CD4-positive, alpha-beta T cell (primary cell): ENCODE measurements at regions of chr1 and their contacts with region 1.

Region 1: GRCh38 chr1:165597883-165598675 is 33.0 kb upstream of the MGST3 start:
- DNase-seq: peak; percentile 65 to 96 (median 81)
- ATAC-seq: peak; percentile 92
- H3K4me3 ChIP-seq: peak overlapping the region; percentile 58
- H3K4me3 Mint-ChIP-seq: peak overlapping the region; percentile 88
- H3K27ac ChIP-seq: no peak overlapping the region
- H3K27ac Mint-ChIP-seq: peak overlapping the region; percentile 38
- H3K4me1 ChIP-seq: peaks cover 19% of the 10 kb centered on the region
- H3K4me1 Mint-ChIP-seq: peaks cover 33% of the 10 kb centered on the region
- H3K27me3 ChIP-seq: peaks cover 18 to 24% of the 10 kb centered on the region in 2 experiments
- H3K27me3 Mint-ChIP-seq: peaks cover 49% of the 10 kb centered on the region
- CTCF ChIP-seq: no peak

Region 2: GRCh38 chr1:165144757-165145397 is 453.2 kb before region 1 on chr1:
- CTCF ChIA-PET with region 1: no interaction called
- POLR2A ChIA-PET with region 1: no interaction called
- intact Hi-C with region 1: loop called in 1 of 2 experiments (anchors 5 kb)
- DNase-seq: peak in 3 of 14 experiments; percentile 4 to 25 (median 18)
- ATAC-seq: no peak
- H3K4me3 ChIP-seq: no peak overlapping the region
- H3K4me3 Mint-ChIP-seq: no peak overlapping the region
- H3K27ac ChIP-seq: no peak overlapping the region
- H3K27ac Mint-ChIP-seq: no peak overlapping the region
- H3K4me1 ChIP-seq: no peaks in the 10 kb centered on the region
- H3K4me1 Mint-ChIP-seq: peaks cover 5% of the 10 kb centered on the region
- H3K27me3 ChIP-seq: no peaks in the 10 kb centered on the region
- H3K27me3 Mint-ChIP-seq: peaks cover 33% of the 10 kb centered on the region
- CTCF ChIP-seq: peak; percentile 48

Region 3: GRCh38 chr1:165392634-165393571 is 205.2 kb before region 1 on chr1:
- CTCF ChIA-PET with region 1: interaction called, 45 read pairs
- POLR2A ChIA-PET with region 1: interaction called, 21 read pairs
- intact Hi-C with region 1: loop called (anchors 1 kb)
- DNase-seq: peak; percentile 83 to 97 (median 88)
- ATAC-seq: peak; percentile 99
- H3K4me3 ChIP-seq: peak overlapping the region; percentile 23
- H3K4me3 Mint-ChIP-seq: peak overlapping the region; percentile 75
- H3K27ac ChIP-seq: no peak overlapping the region
- H3K27ac Mint-ChIP-seq: peak overlapping the region; percentile 75
- H3K4me1 ChIP-seq: peaks cover 19% of the 10 kb centered on the region
- H3K4me1 Mint-ChIP-seq: peaks cover 17% of the 10 kb centered on the region
- H3K27me3 ChIP-seq: peaks cover 56 to 72% of the 10 kb centered on the region in 2 experiments
- H3K27me3 Mint-ChIP-seq: peaks cover 92% of the 10 kb centered on the region
- CTCF ChIP-seq: peak; percentile 98

Region 4: GRCh38 chr1:165610885-165611284 is 12.8 kb after region 1 on chr1:
- CTCF ChIA-PET with region 1: no interaction called
- POLR2A ChIA-PET with region 1: no interaction called
- intact Hi-C with region 1: no loop called
- DNase-seq: no peak
- ATAC-seq: no peak
- H3K4me3 ChIP-seq: no peak overlapping the region
- H3K4me3 Mint-ChIP-seq: no peak overlapping the region
- H3K27ac ChIP-seq: no peak overlapping the region
- H3K27ac Mint-ChIP-seq: no peak overlapping the region
- H3K4me1 ChIP-seq: no peaks in the 10 kb centered on the region
- H3K4me1 Mint-ChIP-seq: no peaks in the 10 kb centered on the region
- H3K27me3 ChIP-seq: peaks cover 11 to 13% of the 10 kb centered on the region in 2 experiments
- H3K27me3 Mint-ChIP-seq: peaks cover 45% of the 10 kb centered on the region
- CTCF ChIP-seq: no peak

Region 5: DNA sequence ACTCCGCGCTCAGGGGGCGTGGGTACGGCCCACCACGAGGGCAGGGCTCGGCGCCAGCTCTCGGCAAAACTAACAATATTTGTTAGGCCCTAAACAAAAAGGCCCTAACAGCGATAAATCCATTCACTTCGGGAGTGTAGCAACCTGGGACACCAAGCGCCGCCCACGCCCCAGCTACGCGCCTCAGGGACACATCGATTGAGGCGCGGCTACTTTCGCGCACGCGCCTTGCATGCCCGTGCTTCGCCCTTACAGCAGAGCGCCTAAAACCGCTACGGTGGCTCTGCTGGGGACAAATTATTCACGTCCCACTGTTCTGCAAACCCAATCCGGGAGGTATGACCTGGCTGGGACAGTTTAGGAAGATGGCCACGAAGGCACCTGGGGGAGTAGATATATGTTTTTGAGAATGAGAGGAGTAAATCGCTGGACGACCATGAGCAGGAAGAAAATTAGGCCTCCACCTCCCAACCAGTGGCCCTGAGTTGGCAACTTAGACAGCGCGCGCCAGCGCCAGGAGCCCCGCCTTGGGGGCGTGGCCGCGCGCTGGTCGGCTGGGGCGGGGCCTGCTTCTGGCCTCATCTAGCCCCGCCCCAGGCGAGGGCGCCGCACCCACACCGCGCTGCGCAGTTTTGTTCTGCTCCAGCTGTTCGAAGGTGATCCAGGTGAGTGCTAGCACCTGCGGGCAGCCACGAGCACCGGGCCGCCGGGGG is 32.7 kb after region 1 on chr1 and contains the start of gene MGST3:
- CTCF ChIA-PET with region 1: interaction called, 3 read pairs
- POLR2A ChIA-PET with region 1: interaction called, 17 read pairs
- intact Hi-C with region 1: loop called in 1 of 2 experiments (anchors 2 kb)
- DNase-seq: peak; percentile 83 to 97 (median 90)
- ATAC-seq: peak; percentile 91
- H3K4me3 ChIP-seq: peak within 1 kb of the TSS; percentile 80
- H3K4me3 Mint-ChIP-seq: no peak within 1 kb of the TSS
- H3K27ac ChIP-seq: peak within 1 kb of the TSS; percentile 55 to 92
- H3K27ac Mint-ChIP-seq: no peak within 1 kb of the TSS
- H3K4me1 ChIP-seq: peaks cover 29% of the 10 kb centered on the region
- H3K4me1 Mint-ChIP-seq: peaks cover 14% of the 10 kb centered on the region
- H3K27me3 ChIP-seq: no peaks in the 10 kb centered on the region
- H3K27me3 Mint-ChIP-seq: no peaks in the 10 kb centered on the region
- CTCF ChIP-seq: no peak
- total RNA-seq, gene MGST3: 22.0 to 23.5 TPM

Region 6: GRCh38 chr1:165645654-165646366 is 47.7 kb after region 1 on chr1:
- CTCF ChIA-PET with region 1: no interaction called
- POLR2A ChIA-PET with region 1: no interaction called
- intact Hi-C with region 1: no loop called
- DNase-seq: peak in 7 of 14 experiments; percentile 5 to 58 (median 28)
- ATAC-seq: peak; percentile 80
- H3K4me3 ChIP-seq: no peak overlapping the region
- H3K4me3 Mint-ChIP-seq: no peak overlapping the region
- H3K27ac ChIP-seq: no peak overlapping the region
- H3K27ac Mint-ChIP-seq: peak overlapping the region; percentile 7
- H3K4me1 ChIP-seq: peaks cover 11% of the 10 kb centered on the region
- H3K4me1 Mint-ChIP-seq: peaks cover 33% of the 10 kb centered on the region
- H3K27me3 ChIP-seq: no peaks in the 10 kb centered on the region
- H3K27me3 Mint-ChIP-seq: no peaks in the 10 kb centered on the region
- CTCF ChIP-seq: no peak

Region 7: GRCh38 chr1:166489670-166490436 is 891.8 kb after region 1 on chr1:
- CTCF ChIA-PET with region 1: no interaction called
- POLR2A ChIA-PET with region 1: no interaction called
- intact Hi-C with region 1: loop called in 1 of 2 experiments (anchors 10 kb)
- DNase-seq: peak; percentile 6 to 85 (median 32)
- ATAC-seq: peak; percentile 88
- H3K4me3 ChIP-seq: peak overlapping the region; percentile 66
- H3K4me3 Mint-ChIP-seq: no peak overlapping the region
- H3K27ac ChIP-seq: peak overlapping the region; percentile 71 to 91
- H3K27ac Mint-ChIP-seq: no peak overlapping the region
- H3K4me1 ChIP-seq: peaks cover 21% of the 10 kb centered on the region
- H3K4me1 Mint-ChIP-seq: no peaks in the 10 kb centered on the region
- H3K27me3 ChIP-seq: no peaks in the 10 kb centered on the region
- H3K27me3 Mint-ChIP-seq: no peaks in the 10 kb centered on the region
- CTCF ChIP-seq: no peak

Region 8: GRCh38 chr1:167016100-167016750 is 1418.1 kb after region 1 on chr1:
- CTCF ChIA-PET with region 1: no interaction called
- POLR2A ChIA-PET with region 1: no interaction called
- intact Hi-C with region 1: no loop called
- DNase-seq: no peak
- ATAC-seq: no peak
- H3K4me3 ChIP-seq: no peak overlapping the region
- H3K4me3 Mint-ChIP-seq: no peak overlapping the region
- H3K27ac ChIP-seq: no peak overlapping the region
- H3K27ac Mint-ChIP-seq: no peak overlapping the region
- H3K4me1 ChIP-seq: no peaks in the 10 kb centered on the region
- H3K4me1 Mint-ChIP-seq: no peaks in the 10 kb centered on the region
- H3K27me3 ChIP-seq: peaks cover 0 to 3% of the 10 kb centered on the region in 2 experiments
- H3K27me3 Mint-ChIP-seq: peaks cover 18% of the 10 kb centered on the region
- CTCF ChIP-seq: no peak